ENCODE measurements at regions of chr19 and their contacts with region 1.

Region 1: DNA sequence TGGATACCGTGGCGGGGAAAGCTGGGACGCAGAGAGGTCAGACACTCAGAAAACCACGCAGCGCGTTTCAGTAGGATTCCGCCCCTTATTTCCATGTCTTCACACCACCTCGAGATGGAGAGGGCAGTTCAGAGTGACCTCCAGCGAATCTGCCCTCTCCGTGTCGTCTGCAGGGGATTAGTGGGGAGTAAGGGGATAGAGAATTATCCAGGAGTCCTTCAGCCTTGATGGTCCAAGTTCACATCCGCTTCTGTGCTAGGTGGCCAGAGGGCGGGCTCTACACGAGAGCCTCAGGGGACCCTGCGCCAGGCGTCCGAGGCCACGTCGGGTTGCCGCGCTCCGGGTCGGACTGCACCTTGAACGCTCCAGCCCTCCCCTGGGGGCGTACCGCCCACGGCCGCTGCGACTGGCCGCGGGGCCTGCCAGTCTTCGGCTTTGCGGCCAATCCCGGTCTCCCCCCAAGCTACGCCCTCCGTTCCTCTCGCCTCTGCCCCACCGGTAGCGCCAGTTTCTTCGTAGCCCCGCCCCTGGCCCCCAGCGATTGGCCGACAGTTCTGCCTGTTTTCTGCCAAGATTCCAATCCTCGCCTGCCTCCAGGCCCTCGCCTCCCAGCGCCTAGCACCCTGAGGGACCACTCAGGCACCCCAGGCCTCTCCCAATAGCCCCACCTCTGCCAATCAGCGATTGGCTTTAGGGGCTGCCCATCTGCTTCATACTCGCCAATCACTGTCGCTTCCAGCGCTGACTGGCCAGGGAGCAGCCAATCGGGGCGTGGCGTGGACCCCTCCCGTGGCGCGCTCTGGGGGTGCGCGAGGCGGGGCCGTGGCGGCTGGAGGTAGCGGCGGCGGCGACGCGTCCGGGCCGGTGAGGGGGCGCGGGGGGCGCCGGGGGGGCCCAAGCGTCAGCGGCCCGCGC is at the start of gene SLC25A42:
- DNase-seq: peak; percentile 100
- ATAC-seq: peak; percentile 85 to 89 (median 86)
- H3K4me3 ChIP-seq: peak within 1 kb of the TSS; percentile 76
- H3K27ac ChIP-seq: peak within 1 kb of the TSS; percentile 78
- H3K4me1 ChIP-seq: peaks cover 61% of the 10 kb centered on the region
- H3K27me3 ChIP-seq: no peaks in the 10 kb centered on the region
- CTCF ChIP-seq: no peak
- total RNA-seq, gene SLC25A42: 14.7 to 40.2 (median 24.5) TPM

Region 2: DNA sequence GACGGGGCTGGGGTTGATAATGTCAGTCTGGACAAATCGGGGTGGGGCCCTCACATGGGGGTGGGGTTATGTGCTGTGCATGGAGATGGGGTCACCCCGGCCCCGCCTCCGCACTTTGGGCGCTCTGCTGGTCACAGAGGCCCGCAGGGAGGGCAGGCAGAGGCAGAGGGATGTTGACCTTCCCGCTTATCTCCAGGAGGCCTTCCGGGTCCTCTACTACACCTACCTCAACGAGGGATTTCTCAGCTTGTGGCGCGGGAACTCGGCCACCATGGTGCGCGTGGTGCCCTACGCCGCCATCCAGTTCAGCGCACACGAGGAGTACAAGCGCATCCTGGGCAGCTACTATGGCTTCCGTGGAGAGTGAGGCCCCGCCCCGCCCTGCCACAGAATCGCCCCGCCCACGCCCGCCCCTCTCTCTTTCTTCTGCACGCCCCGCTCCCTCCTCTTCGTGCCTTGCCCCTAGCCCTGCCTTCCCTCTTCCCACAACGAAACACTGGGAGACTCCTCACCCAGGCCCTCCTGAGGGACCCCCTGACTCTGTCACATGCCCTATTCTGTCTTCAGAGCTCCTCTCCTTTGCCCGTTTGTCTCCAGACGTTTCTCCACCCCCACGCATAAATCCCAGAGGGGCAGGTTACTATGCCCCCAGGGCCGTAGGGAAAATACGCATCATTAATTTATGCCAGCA is 42.1 kb after region 1 on chr19:
- intact Hi-C with region 1: loop called in 1 of 2 experiments (anchors 5 kb)
- DNase-seq: peak in 1 of 2 donors; percentile 65
- ATAC-seq: peak in 1 of 4 donors; percentile 14
- H3K4me3 ChIP-seq: peak overlapping the region; percentile 36
- H3K27ac ChIP-seq: no peak overlapping the region
- H3K4me1 ChIP-seq: peaks cover 16% of the 10 kb centered on the region
- H3K27me3 ChIP-seq: no peaks in the 10 kb centered on the region
- CTCF ChIP-seq: no peak

Region 3: GRCh38 chr19:19115954-19116353 is 52.5 kb after region 1 on chr19:
- intact Hi-C with region 1: no loop called
- DNase-seq: peak; percentile 53 to 78
- ATAC-seq: peak; percentile 46 to 78 (median 55)
- H3K4me3 ChIP-seq: no peak overlapping the region
- H3K27ac ChIP-seq: no peak overlapping the region
- H3K4me1 ChIP-seq: no peaks in the 10 kb centered on the region
- H3K27me3 ChIP-seq: no peaks in the 10 kb centered on the region
- CTCF ChIP-seq: peak; percentile 47

Region 4: DNA sequence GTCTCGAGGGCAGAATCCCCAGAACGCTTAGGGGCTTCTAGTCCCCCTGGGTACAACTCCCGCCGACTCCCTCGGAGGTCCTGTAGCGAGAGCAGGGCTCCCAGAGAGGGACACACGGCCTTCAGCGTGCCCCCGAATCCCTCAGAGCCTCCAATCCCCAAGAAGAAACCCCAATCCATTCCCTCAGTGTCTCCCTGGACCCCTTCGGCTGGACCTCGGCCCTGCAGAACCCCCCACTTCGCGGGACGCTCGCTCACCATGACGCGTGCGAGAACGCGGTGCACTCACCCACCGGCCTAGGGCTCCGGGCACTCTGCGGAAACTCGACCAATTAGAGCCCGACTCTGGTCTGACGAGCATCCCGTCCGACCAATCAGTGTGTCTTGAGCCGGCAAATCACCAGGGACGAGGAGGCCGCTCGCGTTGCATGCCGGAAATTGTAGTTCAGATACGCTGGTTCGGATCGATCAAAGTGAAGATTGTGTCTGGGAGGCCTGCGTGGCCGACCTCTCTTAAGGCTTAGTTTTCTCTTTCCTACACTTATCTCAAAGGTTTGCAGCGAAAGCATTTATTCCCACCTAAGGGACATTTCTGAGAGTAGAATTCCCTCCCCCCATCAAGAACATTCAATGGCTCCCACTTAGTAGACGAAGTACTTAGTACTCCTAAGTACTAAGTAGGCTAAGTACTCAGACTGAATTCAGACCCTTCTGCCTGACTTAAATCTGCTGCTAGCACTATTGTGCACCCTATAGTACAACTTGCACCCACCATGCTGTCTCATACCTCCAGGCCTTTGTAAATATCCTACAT is 74.9 kb after region 1 on chr19 and contains the start of gene TMEM161A:
- intact Hi-C with region 1: loop called in 1 of 2 experiments (anchors 2 kb)
- DNase-seq: peak; percentile 98
- ATAC-seq: peak; percentile 87 to 98 (median 92)
- H3K4me3 ChIP-seq: peak within 1 kb of the TSS; percentile 96
- H3K27ac ChIP-seq: peak within 1 kb of the TSS; percentile 96
- H3K4me1 ChIP-seq: peaks cover 6% of the 10 kb centered on the region
- H3K27me3 ChIP-seq: no peaks in the 10 kb centered on the region
- CTCF ChIP-seq: no peak
- total RNA-seq, gene TMEM161A: 31.3 to 61.3 (median 42.8) TPM

Region 5: GRCh38 chr19:19372656-19373416 is 309.4 kb after region 1 on chr19:
- intact Hi-C with region 1: no loop called
- DNase-seq: peak in 1 of 2 donors; percentile 74
- ATAC-seq: peak in 3 of 4 donors; percentile 62 to 72 (median 68)
- H3K4me3 ChIP-seq: peak overlapping the region; percentile 11
- H3K27ac ChIP-seq: peak overlapping the region; percentile 68
- H3K4me1 ChIP-seq: peaks cover 6% of the 10 kb centered on the region
- H3K27me3 ChIP-seq: no peaks in the 10 kb centered on the region
- CTCF ChIP-seq: no peak

Measured in psoas muscle (tissue), 8 donors.